Prostate gland (tissue), 2 donors: ENCODE measurements at regions of chr17 and their contacts with region 1.

Region 1: GRCh38 chr17:58710936-58711775 is 18.8 kb downstream of the RAD51C start:
- DNase-seq: peak; percentile 44
- H3K4me3 ChIP-seq: no peak overlapping the region
- H3K27ac ChIP-seq: peak overlapping the region in 1 of 2 donors; percentile 23
- H3K4me1 ChIP-seq: no peaks in the 10 kb centered on the region
- H3K27me3 ChIP-seq: no peaks in the 10 kb centered on the region
- CTCF ChIP-seq: peak; percentile 68 to 85 (median 76)
- POLR2A ChIP-seq: no peak

Region 2: DNA sequence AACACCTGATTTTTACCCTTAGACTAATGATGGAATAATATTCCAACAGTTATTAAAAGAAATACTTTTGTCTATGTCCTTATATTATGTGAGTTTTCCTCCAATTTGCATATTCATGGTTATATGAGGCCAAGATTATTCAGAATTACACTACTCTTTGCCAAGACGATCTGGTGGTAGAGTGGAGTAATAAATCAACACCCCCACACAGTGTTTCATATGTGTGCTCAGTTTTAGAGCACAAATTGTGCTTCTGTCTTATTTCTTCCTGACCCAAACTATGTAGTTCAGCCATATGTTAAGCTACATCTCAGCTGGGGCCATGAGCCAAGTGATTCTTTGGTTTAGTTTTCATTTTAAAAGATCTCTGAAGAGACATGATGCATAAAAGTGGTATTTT is 17.6 kb after region 1 on chr17:
- intact Hi-C with region 1: no loop called
- DNase-seq: no peak
- H3K4me3 ChIP-seq: no peak overlapping the region
- H3K27ac ChIP-seq: no peak overlapping the region
- H3K4me1 ChIP-seq: no peaks in the 10 kb centered on the region
- H3K27me3 ChIP-seq: no peaks in the 10 kb centered on the region
- CTCF ChIP-seq: no peak
- POLR2A ChIP-seq: no peak

Region 3: DNA sequence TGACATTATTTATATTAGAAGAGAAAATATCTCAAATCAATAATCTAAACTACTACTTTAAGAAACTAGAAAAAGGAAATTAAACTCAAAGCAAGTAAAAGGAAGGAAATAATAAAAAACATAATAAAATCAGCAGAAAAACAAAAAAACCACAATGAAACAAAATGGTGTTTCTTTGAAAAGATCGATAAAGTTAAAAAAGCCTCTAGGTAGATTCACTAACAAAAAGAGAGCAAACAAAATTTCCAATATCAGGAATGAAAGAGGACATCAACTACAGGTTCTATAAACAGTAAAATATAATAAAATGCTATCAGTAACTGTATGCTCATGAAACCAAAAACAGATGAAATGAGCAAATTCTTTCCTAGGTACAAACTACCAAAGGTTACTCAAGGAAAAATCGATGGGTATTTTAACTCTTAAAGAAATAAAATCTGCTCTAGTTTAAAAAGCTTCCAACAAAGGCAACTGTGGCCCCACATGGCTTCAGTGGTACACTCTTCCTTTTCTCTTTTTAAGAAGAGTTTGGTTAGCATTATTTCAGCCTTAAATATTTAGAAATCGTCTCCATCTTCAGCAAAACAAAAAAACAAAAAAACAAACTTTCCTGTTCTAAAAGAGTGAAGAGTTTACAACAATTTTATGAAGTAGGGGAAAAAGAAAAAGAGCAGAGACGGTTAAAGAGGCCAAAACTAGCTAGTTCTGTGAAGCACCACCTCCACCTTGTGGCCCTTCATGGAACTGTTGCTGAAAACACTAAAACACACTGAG is 293.4 kb after region 1 on chr17:
- intact Hi-C with region 1: loop called (anchors 5 kb)
- DNase-seq: peak; percentile 60
- H3K4me3 ChIP-seq: no peak overlapping the region
- H3K27ac ChIP-seq: peak overlapping the region; percentile 32 to 48
- H3K4me1 ChIP-seq: no peaks in the 10 kb centered on the region
- H3K27me3 ChIP-seq: no peaks in the 10 kb centered on the region
- CTCF ChIP-seq: peak; percentile 91 to 94 (median 92)
- POLR2A ChIP-seq: no peak